WTC11 (cell line): ENCODE measurements at regions of chr22 and their contacts with region 1.

Region 1: GRCh38 chr22:23857606-23858483 is at the start of gene SLC2A11:
- DNase-seq: peak; percentile 97
- ATAC-seq: peak; percentile 87
- H3K4me3 Mint-ChIP-seq: peak within 1 kb of the TSS; percentile 79
- H3K27ac Mint-ChIP-seq: peak within 1 kb of the TSS; percentile 95
- H3K4me1 Mint-ChIP-seq: peaks cover 26% of the 10 kb centered on the region
- H3K27me3 Mint-ChIP-seq: no peaks in the 10 kb centered on the region; the same call in 1 of the 2 replicates
- CTCF ChIP-seq: no peak
- total RNA-seq, gene SLC2A11: 17.2 to 21.1 TPM (median 19.9 TPM) in 3 replicates

Region 2: DNA sequence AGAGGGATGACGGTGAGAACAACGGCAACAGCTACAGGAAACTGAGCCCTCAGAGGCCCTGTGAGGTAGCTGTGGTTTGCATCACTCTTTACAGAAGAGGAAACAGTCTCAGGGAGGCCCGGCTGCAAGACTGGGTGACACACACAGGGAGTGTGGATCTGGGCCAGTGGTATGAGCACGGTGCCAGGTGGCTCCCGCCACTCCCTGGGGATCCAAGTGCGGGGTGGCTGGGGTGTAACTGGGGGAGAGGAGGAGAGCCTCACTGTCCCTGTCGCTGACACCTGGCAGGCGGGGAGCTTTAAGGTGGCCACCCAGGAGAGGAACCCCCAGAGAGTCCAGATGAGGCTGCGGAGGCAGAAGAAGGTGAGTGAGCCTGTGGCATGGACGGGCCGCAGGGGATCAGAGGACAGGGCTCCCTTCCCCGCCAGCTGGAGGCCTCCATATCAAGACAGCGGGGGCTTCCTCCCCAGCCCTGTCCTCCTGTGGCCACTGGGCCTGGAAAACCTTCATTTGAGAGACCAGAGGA is 161.5 kb before region 1 on chr22:
- CTCF ChIA-PET with region 1: no interaction called
- POLR2A ChIA-PET with region 1: no interaction called
- DNase-seq: no peak
- ATAC-seq: no peak
- H3K4me3 Mint-ChIP-seq: no peak overlapping the region
- H3K27ac Mint-ChIP-seq: no peak overlapping the region
- H3K4me1 Mint-ChIP-seq: no peaks in the 10 kb centered on the region
- H3K27me3 Mint-ChIP-seq: no peaks in the 10 kb centered on the region
- CTCF ChIP-seq: no peak

Region 3: GRCh38 chr22:23767673-23768548 is 89.9 kb before region 1 on chr22 and contains the start of gene CHCHD10:
- CTCF ChIA-PET with region 1: interaction called, 21 read pairs
- POLR2A ChIA-PET with region 1: interaction called, 4 read pairs
- DNase-seq: peak; percentile 90
- ATAC-seq: peak; percentile 41
- H3K4me3 Mint-ChIP-seq: peak within 1 kb of the TSS; percentile 89
- H3K27ac Mint-ChIP-seq: no peak within 1 kb of the TSS
- H3K4me1 Mint-ChIP-seq: peaks cover 36% of the 10 kb centered on the region
- H3K27me3 Mint-ChIP-seq: peaks cover 16% of the 10 kb centered on the region
- CTCF ChIP-seq: peak; percentile 81
- total RNA-seq, gene CHCHD10: 170 to 198 TPM (median 171 TPM) in 3 replicates

Region 4: DNA sequence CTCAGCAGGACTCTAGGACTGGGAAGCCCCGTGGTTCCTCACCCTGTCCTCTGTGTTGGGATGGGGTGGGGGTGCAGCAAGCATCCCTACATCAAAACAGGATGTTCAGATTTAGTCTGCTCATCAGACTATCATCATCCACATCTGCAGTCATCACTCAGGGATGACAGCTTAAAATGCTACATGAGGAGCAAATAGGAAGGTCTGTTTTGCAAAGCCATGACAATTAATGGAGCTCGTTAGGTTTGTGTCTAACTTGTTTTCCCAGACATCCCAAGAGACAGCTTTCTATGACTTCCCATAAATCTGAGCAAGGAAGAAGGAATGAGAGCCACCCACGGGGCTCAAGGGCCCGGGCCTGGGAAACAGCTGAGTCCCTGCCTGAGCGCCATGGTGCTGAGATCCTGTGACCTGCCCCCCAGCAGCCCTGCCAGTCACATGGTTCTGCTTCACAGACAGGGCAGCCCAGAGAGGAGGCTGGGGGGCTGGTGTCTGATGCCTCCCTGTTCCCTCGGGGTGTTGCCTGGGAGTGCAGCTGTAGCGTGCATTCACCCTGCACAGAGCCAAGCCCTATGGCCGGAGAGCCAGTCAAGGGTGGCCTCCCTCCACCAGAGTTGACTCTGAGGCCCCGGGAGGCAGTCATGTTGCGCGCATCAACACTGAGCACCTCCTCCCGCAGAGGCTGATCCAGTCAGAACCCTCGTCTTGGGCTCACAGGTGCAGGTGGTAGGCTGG is 31.2 kb before region 1 on chr22:
- CTCF ChIA-PET with region 1: no interaction called
- POLR2A ChIA-PET with region 1: no interaction called
- DNase-seq: no peak
- ATAC-seq: no peak
- H3K4me3 Mint-ChIP-seq: no peak overlapping the region
- H3K27ac Mint-ChIP-seq: peak overlapping the region; percentile 97
- H3K4me1 Mint-ChIP-seq: peaks cover 8% of the 10 kb centered on the region
- H3K27me3 Mint-ChIP-seq: no peaks in the 10 kb centered on the region; the same call in 1 of the 2 replicates
- CTCF ChIP-seq: no peak

Region 5: GRCh38 chr22:23878219-23878618 is 20.4 kb after region 1 on chr22:
- CTCF ChIA-PET with region 1: interaction called, 12 read pairs
- POLR2A ChIA-PET with region 1: no interaction called
- DNase-seq: no peak
- ATAC-seq: no peak
- H3K4me3 Mint-ChIP-seq: no peak overlapping the region
- H3K27ac Mint-ChIP-seq: no peak overlapping the region
- H3K4me1 Mint-ChIP-seq: no peaks in the 10 kb centered on the region; the same call in 1 of the 2 replicates
- H3K27me3 Mint-ChIP-seq: no peaks in the 10 kb centered on the region
- CTCF ChIP-seq: no peak

Region 6: DNA sequence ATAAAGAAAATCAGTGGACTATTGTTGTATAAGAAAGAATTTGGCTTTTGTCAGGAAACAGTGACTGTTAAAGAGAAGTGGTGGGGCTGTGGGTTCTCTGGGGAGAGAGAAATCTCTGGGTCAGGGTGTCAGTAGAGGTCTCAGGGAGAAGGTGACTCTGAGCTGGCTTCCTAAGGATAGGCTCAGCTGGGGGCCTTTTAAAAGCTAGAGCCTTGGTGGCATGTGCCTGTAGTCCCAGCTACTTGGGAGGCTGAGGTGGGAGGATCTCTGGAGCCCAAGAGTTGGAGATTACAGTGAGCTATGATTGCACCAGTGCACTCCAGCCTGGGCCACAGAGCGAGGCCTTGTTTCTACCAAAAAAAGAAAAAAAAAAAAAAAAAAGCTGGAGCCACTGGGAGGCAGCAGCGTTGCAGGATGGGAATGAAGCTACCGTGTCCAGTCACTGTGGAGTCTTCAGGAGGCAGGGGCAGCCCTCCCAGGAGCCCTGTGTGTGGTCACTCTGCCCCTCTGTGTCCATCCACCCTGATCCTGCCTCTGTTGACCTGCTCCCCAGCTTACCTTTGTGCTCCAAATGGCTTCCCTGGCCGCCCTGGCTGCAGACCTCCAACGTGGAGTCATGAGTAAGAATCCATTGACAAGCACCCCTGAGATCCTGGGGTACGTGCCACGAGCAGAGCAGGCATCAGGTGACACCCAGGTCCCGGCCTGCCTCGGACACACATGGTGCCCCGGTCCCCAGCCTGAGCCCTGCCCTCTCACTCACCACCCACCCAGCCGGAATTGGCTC is 31.0 kb after region 1 on chr22:
- CTCF ChIA-PET with region 1: interaction called, 45 read pairs
- POLR2A ChIA-PET with region 1: interaction called, 27 read pairs
- DNase-seq: no peak
- ATAC-seq: peak; percentile 59
- H3K4me3 Mint-ChIP-seq: no peak overlapping the region
- H3K27ac Mint-ChIP-seq: no peak overlapping the region
- H3K4me1 Mint-ChIP-seq: peaks cover 22% of the 10 kb centered on the region
- H3K27me3 Mint-ChIP-seq: peaks cover 16% of the 10 kb centered on the region
- CTCF ChIP-seq: no peak

Region 7: DNA sequence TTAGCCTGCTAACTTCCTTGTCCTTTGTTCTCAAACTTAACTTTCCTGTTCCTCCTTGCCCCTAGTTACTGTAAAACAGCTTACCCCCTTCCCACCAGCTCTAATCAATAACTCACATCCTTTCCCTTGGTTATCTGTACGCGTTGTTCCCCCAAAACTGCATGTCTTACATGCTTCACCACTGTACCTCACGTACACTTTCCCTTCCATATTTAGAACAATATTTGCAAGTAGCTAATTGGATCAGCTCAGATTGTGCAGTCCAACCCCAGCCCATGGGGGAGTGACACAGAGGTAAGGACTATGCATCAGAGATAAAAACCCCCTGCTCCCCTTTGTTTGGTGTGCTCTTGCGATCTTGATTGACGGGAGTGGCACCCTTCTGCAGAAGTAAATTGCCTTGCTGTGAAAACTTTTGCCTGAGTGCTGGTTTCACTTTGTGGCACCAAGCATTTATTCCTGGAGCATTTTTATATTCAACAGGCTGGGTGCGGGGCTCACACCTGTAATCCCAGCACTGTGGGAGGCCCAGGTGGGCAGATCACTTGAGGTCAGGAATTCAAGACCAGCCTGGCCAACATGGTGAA is 67.3 kb after region 1 on chr22:
- CTCF ChIA-PET with region 1: interaction called, 19 read pairs
- POLR2A ChIA-PET with region 1: no interaction called
- DNase-seq: no peak
- ATAC-seq: no peak
- H3K4me3 Mint-ChIP-seq: no peak overlapping the region
- H3K27ac Mint-ChIP-seq: no peak overlapping the region
- H3K4me1 Mint-ChIP-seq: no peaks in the 10 kb centered on the region
- H3K27me3 Mint-ChIP-seq: peaks cover 34% of the 10 kb centered on the region
- CTCF ChIP-seq: no peak